A673 (cell line): ENCODE measurements at regions of chr6 and their contacts with region 1.

Region 1: DNA sequence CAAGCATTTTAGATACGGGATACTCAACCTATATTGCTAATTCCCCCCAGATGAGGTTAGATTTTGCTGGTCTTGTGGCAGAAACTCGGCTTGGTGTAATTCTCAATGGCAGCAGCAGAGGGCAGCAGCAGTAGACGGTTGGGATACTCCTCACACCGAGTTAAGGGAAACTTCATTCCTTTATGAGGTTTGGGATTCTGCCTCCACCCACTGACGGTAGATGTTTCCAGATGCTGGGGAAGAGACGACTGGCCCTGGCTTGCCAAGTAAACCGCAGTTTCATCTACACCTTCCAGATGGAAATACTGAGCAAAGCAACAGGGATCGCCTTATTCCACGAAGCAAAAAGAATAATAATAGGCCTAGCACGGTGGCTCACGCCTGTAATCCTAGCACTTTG is 8.2 kb upstream of the TBC1D7 start:
- DNase-seq: peak; percentile 89
- H3K4me3 ChIP-seq: no peak overlapping the region
- H3K27ac ChIP-seq: no peak overlapping the region
- H3K4me1 ChIP-seq: no peaks in the 10 kb centered on the region
- H3K27me3 ChIP-seq: no peaks in the 10 kb centered on the region
- CTCF ChIP-seq: peak; percentile 91

Region 2: DNA sequence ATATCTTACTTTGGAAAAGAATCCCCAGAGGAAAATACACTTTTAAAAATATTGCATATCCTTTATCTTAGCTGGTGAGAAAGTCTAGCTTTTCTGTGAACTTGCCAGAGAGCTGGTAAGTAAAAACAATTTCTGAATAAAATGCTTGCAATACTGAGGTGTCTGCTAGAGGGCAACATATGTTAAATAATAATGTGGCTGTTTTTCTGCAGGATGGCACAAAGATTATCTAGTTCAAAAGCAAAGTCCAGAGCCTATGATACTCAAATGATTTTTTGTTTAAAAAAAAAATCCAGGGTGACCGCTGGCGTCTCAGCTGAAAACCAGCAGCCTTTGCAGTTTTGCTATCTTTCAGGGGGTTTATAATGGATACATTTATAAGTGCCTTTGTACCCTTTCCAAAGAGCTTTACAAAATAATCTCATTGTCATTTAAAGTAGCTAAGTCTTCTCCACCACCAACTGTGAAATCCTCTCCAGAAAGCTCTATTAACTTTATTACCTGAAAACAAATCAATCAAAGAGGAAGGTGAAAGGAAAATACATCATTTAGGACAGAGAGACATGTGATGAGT is 425.1 kb before region 1 on chr6:
- CTCF ChIA-PET with region 1: no interaction called
- POLR2A ChIA-PET with region 1: no interaction called
- intact Hi-C with region 1: loop called (anchors 5 kb)
- DNase-seq: peak; percentile 62
- H3K4me3 ChIP-seq: no peak overlapping the region
- H3K27ac ChIP-seq: no peak overlapping the region
- H3K4me1 ChIP-seq: no peaks in the 10 kb centered on the region
- H3K27me3 ChIP-seq: peaks cover 6% of the 10 kb centered on the region
- CTCF ChIP-seq: peak; percentile 58

Region 3: GRCh38 chr6:13229205-13230085 is 107.1 kb before region 1 on chr6:
- CTCF ChIA-PET with region 1: no interaction called
- POLR2A ChIA-PET with region 1: no interaction called
- intact Hi-C with region 1: loop called (anchors 2 kb)
- DNase-seq: peak; percentile 82
- H3K4me3 ChIP-seq: no peak overlapping the region
- H3K27ac ChIP-seq: no peak overlapping the region
- H3K4me1 ChIP-seq: peaks cover 12% of the 10 kb centered on the region
- H3K27me3 ChIP-seq: peaks cover 3% of the 10 kb centered on the region
- CTCF ChIP-seq: peak; percentile 68

Region 4: GRCh38 chr6:13538084-13538483 is 201.5 kb after region 1 on chr6:
- CTCF ChIA-PET with region 1: no interaction called
- POLR2A ChIA-PET with region 1: no interaction called
- intact Hi-C with region 1: loop called (anchors 1 kb)
- DNase-seq: peak; percentile 72
- H3K4me3 ChIP-seq: no peak overlapping the region
- H3K27ac ChIP-seq: no peak overlapping the region
- H3K4me1 ChIP-seq: no peaks in the 10 kb centered on the region
- H3K27me3 ChIP-seq: no peaks in the 10 kb centered on the region
- CTCF ChIP-seq: peak; percentile 57

Region 5: GRCh38 chr6:14066782-14067406 is 730.3 kb after region 1 on chr6:
- CTCF ChIA-PET with region 1: no interaction called
- POLR2A ChIA-PET with region 1: no interaction called
- intact Hi-C with region 1: loop called (anchors 2 kb)
- DNase-seq: peak; percentile 84
- H3K4me3 ChIP-seq: no peak overlapping the region
- H3K27ac ChIP-seq: no peak overlapping the region
- H3K4me1 ChIP-seq: no peaks in the 10 kb centered on the region
- H3K27me3 ChIP-seq: no peaks in the 10 kb centered on the region
- CTCF ChIP-seq: peak; percentile 75